Caco-2 (cell line): ENCODE measurements at regions of chr4 and their contacts with region 1.

Region 1: DNA sequence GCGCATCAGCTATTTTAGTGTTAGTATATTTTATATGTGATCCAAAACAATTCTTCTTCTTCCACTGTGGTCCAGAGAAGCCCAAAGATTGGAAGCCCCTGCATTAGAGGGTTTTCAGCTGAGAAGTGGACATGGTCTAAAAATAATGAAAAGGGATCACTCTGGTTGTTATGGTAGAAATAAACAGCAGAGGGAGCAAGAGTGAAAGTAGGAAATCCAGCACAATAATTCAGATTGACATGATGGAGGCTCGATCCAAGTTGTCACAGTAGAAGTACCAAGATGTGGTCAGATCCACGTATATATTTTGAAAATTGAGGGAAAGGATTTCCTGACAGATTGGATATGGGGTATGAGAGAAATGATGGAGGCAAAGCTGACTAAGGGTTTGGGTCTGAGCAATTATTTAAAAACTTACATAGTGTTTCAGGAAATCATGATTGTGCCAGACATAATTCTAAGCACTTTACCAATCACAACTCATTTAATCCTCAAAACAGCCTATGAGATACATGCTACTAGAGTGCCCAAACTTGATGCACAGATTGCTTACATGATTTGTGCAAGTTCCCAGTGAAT is 17.0 kb upstream of the TMEM144 start:
- DNase-seq: peak in 1 of 2 experiments; percentile 37
- H3K4me3 ChIP-seq: no peak overlapping the region
- H3K4me3 Mint-ChIP-seq: no peak overlapping the region
- H3K27ac Mint-ChIP-seq: no peak overlapping the region
- H3K4me1 ChIP-seq: no peaks in the 10 kb centered on the region
- H3K4me1 Mint-ChIP-seq: peaks cover 6% of the 10 kb centered on the region
- H3K27me3 ChIP-seq: no peaks in the 10 kb centered on the region
- H3K27me3 Mint-ChIP-seq: no peaks in the 10 kb centered on the region
- CTCF ChIP-seq: peak; percentile 35 to 44

Region 2: DNA sequence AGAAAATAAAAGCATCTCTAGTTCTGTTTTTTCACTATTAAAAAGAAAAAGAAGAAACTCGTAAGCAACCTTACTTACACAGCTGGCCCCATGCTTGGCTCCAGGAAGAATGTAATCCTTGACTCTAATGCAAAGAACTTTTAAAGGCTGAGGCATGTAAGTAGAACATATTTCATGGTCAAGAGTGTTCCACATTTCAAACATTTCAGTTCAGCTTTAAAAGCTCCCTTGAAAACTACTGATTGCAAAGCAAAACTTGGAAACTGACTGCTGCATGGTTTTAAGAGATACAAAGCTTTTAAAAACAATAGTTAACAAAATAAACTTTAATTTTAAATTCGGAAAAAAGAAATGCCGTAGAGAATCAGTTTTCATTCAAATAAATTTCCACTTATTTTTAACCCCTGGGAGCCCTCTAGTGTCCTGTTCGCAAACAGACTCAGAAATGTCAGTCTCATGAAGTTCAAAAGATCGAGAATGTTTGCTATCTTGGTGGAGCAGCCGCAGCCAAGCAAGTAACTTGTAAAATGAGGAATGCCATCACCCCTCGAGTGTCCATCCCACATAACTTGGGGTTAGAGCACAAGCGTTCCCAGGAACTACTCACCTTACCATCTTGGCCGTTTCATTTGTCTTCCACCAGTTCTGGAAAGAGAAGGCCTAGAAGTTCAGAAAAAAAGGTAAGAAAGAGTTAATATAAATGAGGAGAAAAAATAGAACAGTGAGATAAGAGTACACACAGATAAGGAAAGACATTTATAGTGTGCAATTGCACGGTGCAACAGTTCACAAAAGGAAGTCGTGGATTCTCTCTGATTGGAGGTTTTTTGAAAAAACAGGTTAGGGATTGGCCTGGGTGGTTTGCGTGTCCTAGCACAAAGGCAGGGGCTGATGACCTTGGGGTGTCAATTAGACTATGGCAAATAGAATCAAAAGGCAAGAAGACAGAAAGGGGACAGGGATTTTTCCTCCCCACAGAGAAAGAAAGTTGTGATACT is 20.7 kb before region 1 on chr4 and contains the start of gene GASK1B:
- CTCF ChIA-PET with region 1: no interaction called
- POLR2A ChIA-PET with region 1: no interaction called
- intact Hi-C with region 1: no loop called
- DNase-seq: peak; percentile 56 to 68
- H3K4me3 ChIP-seq: peak within 1 kb of the TSS; percentile 49
- H3K4me3 Mint-ChIP-seq: peak within 1 kb of the TSS; percentile 89
- H3K27ac Mint-ChIP-seq: peak within 1 kb of the TSS; percentile 97
- H3K4me1 ChIP-seq: peaks cover 14% of the 10 kb centered on the region
- H3K4me1 Mint-ChIP-seq: peaks cover 14% of the 10 kb centered on the region
- H3K27me3 ChIP-seq: no peaks in the 10 kb centered on the region
- H3K27me3 Mint-ChIP-seq: no peaks in the 10 kb centered on the region
- CTCF ChIP-seq: peak; percentile 25 to 27
- total RNA-seq, gene GASK1B: 42.5 and 48.5 TPM in 2 replicates

Region 3: GRCh38 chr4:158253350-158253980 is 60.2 kb after region 1 on chr4:
- CTCF ChIA-PET with region 1: interaction called, 4 read pairs
- POLR2A ChIA-PET with region 1: no interaction called
- intact Hi-C with region 1: loop called (anchors 1 kb)
- DNase-seq: peak in 1 of 2 experiments; percentile 71
- H3K4me3 ChIP-seq: no peak overlapping the region
- H3K4me3 Mint-ChIP-seq: no peak overlapping the region
- H3K27ac Mint-ChIP-seq: no peak overlapping the region
- H3K4me1 ChIP-seq: no peaks in the 10 kb centered on the region
- H3K4me1 Mint-ChIP-seq: no peaks in the 10 kb centered on the region
- H3K27me3 ChIP-seq: no peaks in the 10 kb centered on the region
- H3K27me3 Mint-ChIP-seq: no peaks in the 10 kb centered on the region
- CTCF ChIP-seq: peak; percentile 44 to 61